MCF 10A (cell line): ENCODE measurements at regions of chr18 and their contacts with region 1.

Region 1: DNA sequence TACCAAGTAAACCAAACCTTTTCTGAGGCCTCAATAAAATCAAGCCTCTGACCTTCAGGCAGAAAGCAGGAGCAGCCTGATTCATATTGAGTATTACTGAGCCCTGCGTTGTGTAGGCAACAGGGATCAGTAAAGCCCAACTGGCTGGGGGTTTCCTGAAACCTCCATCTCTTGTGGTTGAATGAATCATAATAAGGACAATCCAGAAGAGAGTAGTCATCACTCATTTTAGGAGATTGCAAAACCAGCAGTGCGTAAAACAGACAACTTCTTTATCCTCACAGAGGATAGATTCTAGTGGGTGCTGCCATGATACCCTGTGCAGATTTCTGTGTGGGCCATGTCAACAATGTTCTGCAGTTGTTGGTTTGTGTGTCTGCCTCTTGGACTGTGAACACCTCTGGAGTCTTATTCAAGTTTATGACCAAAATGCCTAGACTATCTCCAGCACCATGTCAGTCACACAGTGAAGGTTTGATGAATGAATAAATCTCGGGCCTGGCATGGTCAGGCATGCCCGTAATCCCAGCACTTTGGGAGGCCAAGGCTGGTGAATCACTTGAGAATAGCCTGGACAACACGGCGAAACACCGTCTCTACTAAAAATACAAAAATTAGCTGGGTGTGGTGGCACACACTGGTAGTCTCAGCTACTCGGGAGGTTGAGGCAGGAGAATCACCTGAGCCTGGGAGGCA is 51.8 kb upstream of the RAB27B start:
- DNase-seq: peak; percentile 98
- H3K4me3 Mint-ChIP-seq: peak overlapping the region; percentile 16
- H3K27ac Mint-ChIP-seq: peak overlapping the region; percentile 92
- H3K4me1 Mint-ChIP-seq: peaks cover 50% of the 10 kb centered on the region
- H3K27me3 Mint-ChIP-seq: no peaks in the 10 kb centered on the region
- CTCF ChIP-seq: no peak

Region 2: GRCh38 chr18:54712306-54712705 is 64.1 kb before region 1 on chr18:
- CTCF ChIA-PET with region 1: interaction called, 10 read pairs
- POLR2A ChIA-PET with region 1: interaction called, 21 read pairs
- intact Hi-C with region 1: loop called (anchors 1 kb)
- DNase-seq: peak; percentile 90
- H3K4me3 Mint-ChIP-seq: no peak overlapping the region
- H3K27ac Mint-ChIP-seq: peak overlapping the region; percentile 14
- H3K4me1 Mint-ChIP-seq: peaks cover 23% of the 10 kb centered on the region
- H3K27me3 Mint-ChIP-seq: no peaks in the 10 kb centered on the region
- CTCF ChIP-seq: no peak

Region 3: DNA sequence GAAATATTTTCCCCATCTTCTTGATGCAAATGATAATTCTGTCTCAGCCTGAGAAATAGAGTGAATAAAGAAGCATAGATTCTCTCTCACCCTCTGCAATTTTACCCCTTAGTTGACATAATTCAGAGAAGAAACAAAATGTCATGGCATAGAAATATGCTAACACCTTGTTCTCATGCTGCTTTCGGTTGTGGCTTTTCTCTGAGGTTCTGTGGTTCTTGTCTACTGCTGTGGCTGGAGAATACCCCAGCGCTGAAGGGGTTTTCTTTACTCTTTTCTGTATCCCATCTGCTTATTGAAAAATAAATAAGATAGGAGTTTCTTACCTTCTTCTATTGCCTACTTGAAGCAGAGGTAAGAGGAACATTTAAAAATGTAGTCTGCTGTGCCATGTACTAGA is 36.5 kb after region 1 on chr18:
- CTCF ChIA-PET with region 1: no interaction called
- POLR2A ChIA-PET with region 1: no interaction called
- intact Hi-C with region 1: no loop called
- DNase-seq: no peak
- H3K4me3 Mint-ChIP-seq: no peak overlapping the region
- H3K27ac Mint-ChIP-seq: no peak overlapping the region
- H3K4me1 Mint-ChIP-seq: no peaks in the 10 kb centered on the region
- H3K27me3 Mint-ChIP-seq: no peaks in the 10 kb centered on the region
- CTCF ChIP-seq: no peak

Region 4: DNA sequence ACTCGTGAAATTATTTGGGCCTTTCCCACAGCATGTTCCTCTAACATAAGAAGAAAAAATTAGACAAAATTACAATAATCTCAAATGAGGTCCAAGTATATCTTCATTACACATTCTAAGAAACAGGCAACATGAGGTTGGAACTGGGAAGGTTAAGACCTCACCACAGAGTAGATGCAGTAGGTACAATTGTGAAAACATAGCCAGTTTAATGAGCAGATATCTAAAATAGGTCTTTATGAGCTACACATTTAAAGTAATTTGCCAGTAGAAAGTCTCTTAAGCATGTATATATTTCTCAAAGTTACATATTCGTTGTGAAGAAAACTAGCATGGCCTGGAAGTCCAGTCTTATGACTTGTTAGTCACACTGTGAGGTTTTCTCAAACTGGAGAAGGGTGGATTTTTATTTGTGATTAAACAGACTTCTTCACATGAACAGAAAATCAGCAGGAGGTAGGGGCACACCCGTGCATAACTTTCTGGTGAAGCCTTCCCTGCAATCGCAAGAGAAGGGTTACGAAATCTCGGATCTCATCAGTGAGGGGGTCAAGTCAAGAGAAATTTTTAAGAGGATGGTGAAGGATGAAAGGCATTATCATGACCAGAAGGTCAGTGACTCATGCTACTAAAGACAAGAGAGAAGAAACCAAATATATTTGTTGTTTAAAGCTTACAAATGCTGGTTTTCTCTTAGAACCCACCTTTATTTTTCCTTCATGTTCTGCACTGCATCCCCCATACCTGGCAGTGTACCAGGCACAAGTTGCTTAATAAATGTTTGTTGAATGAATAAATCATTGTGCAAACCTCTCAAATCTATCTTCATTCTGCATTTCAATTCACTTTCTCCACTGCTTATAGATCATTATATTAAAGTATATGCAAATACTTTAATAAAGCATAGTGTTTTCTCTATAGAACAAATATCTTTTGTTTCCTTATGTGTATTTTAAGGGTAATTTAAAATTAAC is 46.7 kb after region 1 on chr18:
- CTCF ChIA-PET with region 1: interaction called, 6 read pairs
- POLR2A ChIA-PET with region 1: interaction called, 36 read pairs
- intact Hi-C with region 1: loop called (anchors 1 kb)
- DNase-seq: peak; percentile 95
- H3K4me3 Mint-ChIP-seq: peak overlapping the region; percentile 24
- H3K27ac Mint-ChIP-seq: peak overlapping the region; percentile 90
- H3K4me1 Mint-ChIP-seq: peaks cover 43% of the 10 kb centered on the region
- H3K27me3 Mint-ChIP-seq: no peaks in the 10 kb centered on the region
- CTCF ChIP-seq: no peak

Region 5: GRCh38 chr18:54946149-54946581 is 169.7 kb after region 1 on chr18:
- CTCF ChIA-PET with region 1: no interaction called
- POLR2A ChIA-PET with region 1: no interaction called
- intact Hi-C with region 1: loop called (anchors 5 kb)
- DNase-seq: peak; percentile 56
- H3K4me3 Mint-ChIP-seq: peak overlapping the region; percentile 77
- H3K27ac Mint-ChIP-seq: peak overlapping the region; percentile 95
- H3K4me1 Mint-ChIP-seq: peaks cover 9% of the 10 kb centered on the region
- H3K27me3 Mint-ChIP-seq: no peaks in the 10 kb centered on the region
- CTCF ChIP-seq: no peak

Region 6: DNA sequence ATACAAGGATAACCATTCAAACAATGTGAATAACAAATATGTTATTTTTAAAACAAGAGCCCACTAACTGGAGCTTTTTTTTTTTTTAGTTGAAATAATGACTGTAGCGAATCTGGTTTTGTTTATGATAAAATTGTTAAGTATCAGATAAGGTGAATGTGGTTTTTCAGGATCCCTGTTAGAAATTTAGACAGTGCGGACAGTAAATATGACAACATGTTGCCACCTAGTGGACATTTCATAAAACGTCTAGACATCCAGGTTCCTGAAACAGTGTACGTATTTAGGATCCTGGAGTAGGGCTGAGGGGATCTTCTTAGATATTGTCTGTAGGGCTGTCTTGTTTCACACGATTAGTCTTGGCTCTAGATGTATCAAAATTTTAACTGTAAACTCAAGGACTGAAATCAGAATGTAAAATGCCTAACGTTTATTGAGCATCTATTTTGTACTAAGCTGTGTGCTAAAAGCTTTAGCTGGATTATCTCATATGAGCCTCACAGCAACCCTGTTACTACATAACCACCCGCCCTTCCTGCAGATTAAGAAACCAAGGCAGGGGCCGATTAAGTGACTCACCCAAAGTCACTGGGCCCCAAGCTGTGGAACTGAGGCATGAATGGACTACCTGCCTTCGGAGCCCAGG is 206.7 kb after region 1 on chr18:
- CTCF ChIA-PET with region 1: interaction called, 3 read pairs
- POLR2A ChIA-PET with region 1: no interaction called
- intact Hi-C with region 1: loop called (anchors 1 kb)
- DNase-seq: peak; percentile 73
- H3K4me3 Mint-ChIP-seq: no peak overlapping the region
- H3K27ac Mint-ChIP-seq: no peak overlapping the region
- H3K4me1 Mint-ChIP-seq: no peaks in the 10 kb centered on the region
- H3K27me3 Mint-ChIP-seq: no peaks in the 10 kb centered on the region
- CTCF ChIP-seq: peak; percentile 74